ENCODE measurements at regions of chr15 and their contacts with region 1.

Region 1: GRCh38 chr15:74322181-74323076 is 45.0 kb downstream of the CYP11A1 start:
- DNase-seq: peak; percentile 68 to 75
- H3K4me3 ChIP-seq: no peak overlapping the region
- H3K4me3 Mint-ChIP-seq: no peak overlapping the region
- H3K27ac Mint-ChIP-seq: no peak overlapping the region
- H3K4me1 ChIP-seq: no peaks in the 10 kb centered on the region
- H3K4me1 Mint-ChIP-seq: no peaks in the 10 kb centered on the region
- H3K27me3 ChIP-seq: no peaks in the 10 kb centered on the region
- H3K27me3 Mint-ChIP-seq: peaks cover 5% of the 10 kb centered on the region
- CTCF ChIP-seq: peak; percentile 77 to 86

Region 2: DNA sequence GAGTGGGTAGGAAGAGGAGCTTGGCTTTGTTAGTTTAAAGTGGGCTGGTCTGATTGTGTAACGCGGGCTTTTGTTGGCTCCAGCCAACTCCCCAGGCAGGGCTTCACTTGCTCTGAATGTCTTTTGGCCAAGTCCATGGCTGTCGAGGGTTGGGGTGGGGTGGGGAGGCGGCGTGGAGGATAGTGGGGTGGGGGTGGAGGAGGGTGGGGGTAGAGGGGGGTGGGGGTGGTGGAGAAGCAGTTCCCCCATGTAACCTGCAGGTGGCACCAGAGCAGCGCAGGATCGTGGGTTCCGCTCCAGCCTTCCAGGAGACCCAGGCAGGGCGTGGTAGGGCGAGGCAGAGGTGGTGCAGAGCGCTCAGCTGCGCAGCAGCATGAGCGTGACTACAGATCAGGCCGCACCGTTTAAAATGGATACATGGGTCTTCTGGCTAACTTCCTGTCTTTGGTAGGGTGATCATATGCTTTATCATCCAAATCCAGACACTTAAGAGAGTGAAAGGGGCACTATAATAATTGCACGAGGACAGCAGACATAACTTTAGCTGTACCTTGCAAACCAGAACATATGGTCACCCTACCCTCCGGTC is 268.4 kb before region 1 on chr15:
- CTCF ChIA-PET with region 1: no interaction called
- POLR2A ChIA-PET with region 1: no interaction called
- intact Hi-C with region 1: loop called (anchors 5 kb)
- DNase-seq: peak; percentile 62 to 67
- H3K4me3 ChIP-seq: no peak overlapping the region
- H3K4me3 Mint-ChIP-seq: no peak overlapping the region
- H3K27ac Mint-ChIP-seq: no peak overlapping the region
- H3K4me1 ChIP-seq: no peaks in the 10 kb centered on the region
- H3K4me1 Mint-ChIP-seq: no peaks in the 10 kb centered on the region
- H3K27me3 ChIP-seq: no peaks in the 10 kb centered on the region
- H3K27me3 Mint-ChIP-seq: peaks cover 15% of the 10 kb centered on the region
- CTCF ChIP-seq: peak; percentile 59 to 61

Region 3: DNA sequence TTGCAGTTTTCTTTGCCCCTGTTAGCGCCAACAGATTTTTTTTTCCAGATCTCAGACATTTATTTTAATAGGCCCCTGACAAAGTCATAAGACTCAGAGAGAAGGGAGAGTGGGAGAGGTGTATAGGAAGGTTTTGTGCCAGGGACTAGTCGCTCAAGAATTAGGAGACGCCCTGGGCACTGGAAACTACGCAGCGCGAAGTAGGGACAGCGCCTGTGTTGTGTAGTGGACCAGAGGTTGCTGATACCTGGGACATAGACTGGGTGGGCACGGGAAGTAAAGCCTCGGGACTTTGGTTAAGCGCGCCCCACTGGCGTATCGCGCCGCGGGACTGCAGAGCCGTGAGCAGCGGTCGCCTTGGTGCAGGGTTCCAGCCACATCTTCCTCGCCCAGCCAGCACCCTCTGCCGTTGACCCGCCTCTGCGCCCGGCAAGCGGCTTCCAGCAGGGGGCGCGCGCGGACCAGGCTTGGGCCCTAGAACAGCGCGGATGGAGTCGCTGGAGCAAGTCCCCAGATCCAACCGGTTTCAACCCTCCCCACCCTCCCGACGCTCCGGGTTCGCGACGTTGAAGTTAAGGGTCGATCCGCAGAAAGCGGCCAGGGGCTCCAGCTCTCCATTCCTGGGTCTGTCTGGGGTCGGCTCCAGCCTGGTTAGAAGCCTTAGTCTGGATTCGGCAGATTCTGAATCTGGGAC is 195.0 kb before region 1 on chr15:
- CTCF ChIA-PET with region 1: no interaction called
- POLR2A ChIA-PET with region 1: no interaction called
- intact Hi-C with region 1: loop called (anchors 1 kb)
- DNase-seq: peak; percentile 79 to 92
- H3K4me3 ChIP-seq: no peak overlapping the region
- H3K4me3 Mint-ChIP-seq: peak overlapping the region; percentile 45
- H3K27ac Mint-ChIP-seq: no peak overlapping the region
- H3K4me1 ChIP-seq: no peaks in the 10 kb centered on the region
- H3K4me1 Mint-ChIP-seq: no peaks in the 10 kb centered on the region
- H3K27me3 ChIP-seq: peaks cover 4% of the 10 kb centered on the region
- H3K27me3 Mint-ChIP-seq: peaks cover 54% of the 10 kb centered on the region
- CTCF ChIP-seq: peak; percentile 92 to 99

Measured in Caco-2 (cell line).